Activated CD4-positive, alpha-beta memory T cell treated with anti-CD3 and anti-CD28 coated beads for 36 hours (primary cell): ENCODE measurements at regions of chr1 and their contacts with region 1.

Region 1: DNA sequence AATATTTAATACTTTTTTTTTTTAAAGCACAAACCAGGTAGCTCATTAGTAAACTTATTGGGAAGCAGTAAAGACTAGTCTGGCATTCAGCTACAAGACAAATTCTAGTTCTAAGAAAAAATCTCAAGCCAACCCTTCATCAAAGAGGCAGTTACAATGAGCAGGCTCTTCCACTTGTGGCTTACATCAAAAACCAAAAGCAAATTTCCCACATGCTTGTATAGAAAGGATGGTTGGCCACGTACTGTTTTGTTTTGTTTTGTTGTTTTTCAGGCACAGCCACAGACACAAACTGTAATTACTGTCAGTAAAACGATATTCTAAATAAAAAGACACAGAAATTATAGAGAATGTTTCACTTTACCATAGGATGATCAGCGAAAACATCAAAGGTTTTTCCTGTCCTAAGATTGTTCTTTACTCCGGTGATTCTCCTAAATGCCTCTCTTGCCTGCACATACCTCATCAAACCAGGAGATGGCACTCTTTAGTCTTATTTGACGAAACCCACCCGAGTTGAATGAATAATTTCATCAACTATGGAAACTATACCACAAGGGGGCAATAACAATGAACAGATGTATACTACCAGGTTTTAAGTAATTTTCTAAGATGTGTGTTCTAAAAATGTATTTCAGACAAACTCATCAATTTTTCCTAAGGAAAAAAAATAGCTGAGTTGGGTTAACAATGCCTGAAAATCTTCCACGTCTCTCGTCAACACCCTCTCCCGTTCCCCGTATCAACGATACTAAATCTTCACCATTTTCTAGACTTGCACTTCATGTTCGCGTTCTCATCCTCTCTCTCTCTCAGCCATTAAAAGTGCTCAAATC is 26.9 kb downstream of the RPL5 start:
- DNase-seq: peak; percentile 39
- H3K4me3 Mint-ChIP-seq: peak overlapping the region; percentile 7
- H3K27ac Mint-ChIP-seq: peak overlapping the region; percentile 0
- H3K4me1 Mint-ChIP-seq: peaks cover 19% of the 10 kb centered on the region
- H3K27me3 Mint-ChIP-seq: no peaks in the 10 kb centered on the region

Region 2: DNA sequence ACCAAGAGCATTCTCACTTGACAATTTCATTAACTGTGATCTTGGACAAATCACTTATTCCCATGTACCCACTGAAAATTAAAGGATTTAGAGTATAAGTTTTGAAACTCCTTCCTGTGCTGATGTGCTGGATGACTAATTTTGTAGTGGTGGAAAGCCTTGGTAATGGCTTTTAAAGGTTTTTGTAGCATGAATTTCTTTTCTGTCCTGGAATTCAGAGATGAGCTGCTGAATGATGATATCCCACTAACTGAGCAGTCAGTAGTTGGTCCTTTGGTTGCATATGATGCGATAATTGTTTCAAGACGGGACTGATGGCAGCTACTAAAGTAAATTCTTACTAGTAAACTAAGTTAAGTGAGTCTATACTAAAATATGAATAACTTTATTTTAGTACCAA is 21.7 kb before region 1 on chr1:
- CTCF ChIA-PET with region 1: interaction called, 11 read pairs
- POLR2A ChIA-PET with region 1: interaction called, 3 read pairs
- intact Hi-C with region 1: no loop called
- DNase-seq: no peak
- H3K4me3 Mint-ChIP-seq: peak overlapping the region; percentile 38
- H3K27ac Mint-ChIP-seq: peak overlapping the region; percentile 95
- H3K4me1 Mint-ChIP-seq: peaks cover 79% of the 10 kb centered on the region
- H3K27me3 Mint-ChIP-seq: no peaks in the 10 kb centered on the region

Region 3: GRCh38 chr1:92877792-92878191 is 19.0 kb after region 1 on chr1:
- CTCF ChIA-PET with region 1: interaction called, 20 read pairs
- POLR2A ChIA-PET with region 1: no interaction called
- intact Hi-C with region 1: loop called (anchors 1 kb)
- DNase-seq: no peak
- H3K4me3 Mint-ChIP-seq: peak overlapping the region; percentile 23
- H3K27ac Mint-ChIP-seq: peak overlapping the region; percentile 70
- H3K4me1 Mint-ChIP-seq: peaks cover 27% of the 10 kb centered on the region
- H3K27me3 Mint-ChIP-seq: no peaks in the 10 kb centered on the region

Region 4: GRCh38 chr1:92951141-92951582 is 92.4 kb after region 1 on chr1:
- CTCF ChIA-PET with region 1: interaction called, 172 read pairs
- POLR2A ChIA-PET with region 1: no interaction called
- intact Hi-C with region 1: no loop called
- DNase-seq: peak; percentile 36
- H3K4me3 Mint-ChIP-seq: no peak overlapping the region
- H3K27ac Mint-ChIP-seq: no peak overlapping the region
- H3K4me1 Mint-ChIP-seq: peaks cover 36% of the 10 kb centered on the region
- H3K27me3 Mint-ChIP-seq: no peaks in the 10 kb centered on the region

Region 5: DNA sequence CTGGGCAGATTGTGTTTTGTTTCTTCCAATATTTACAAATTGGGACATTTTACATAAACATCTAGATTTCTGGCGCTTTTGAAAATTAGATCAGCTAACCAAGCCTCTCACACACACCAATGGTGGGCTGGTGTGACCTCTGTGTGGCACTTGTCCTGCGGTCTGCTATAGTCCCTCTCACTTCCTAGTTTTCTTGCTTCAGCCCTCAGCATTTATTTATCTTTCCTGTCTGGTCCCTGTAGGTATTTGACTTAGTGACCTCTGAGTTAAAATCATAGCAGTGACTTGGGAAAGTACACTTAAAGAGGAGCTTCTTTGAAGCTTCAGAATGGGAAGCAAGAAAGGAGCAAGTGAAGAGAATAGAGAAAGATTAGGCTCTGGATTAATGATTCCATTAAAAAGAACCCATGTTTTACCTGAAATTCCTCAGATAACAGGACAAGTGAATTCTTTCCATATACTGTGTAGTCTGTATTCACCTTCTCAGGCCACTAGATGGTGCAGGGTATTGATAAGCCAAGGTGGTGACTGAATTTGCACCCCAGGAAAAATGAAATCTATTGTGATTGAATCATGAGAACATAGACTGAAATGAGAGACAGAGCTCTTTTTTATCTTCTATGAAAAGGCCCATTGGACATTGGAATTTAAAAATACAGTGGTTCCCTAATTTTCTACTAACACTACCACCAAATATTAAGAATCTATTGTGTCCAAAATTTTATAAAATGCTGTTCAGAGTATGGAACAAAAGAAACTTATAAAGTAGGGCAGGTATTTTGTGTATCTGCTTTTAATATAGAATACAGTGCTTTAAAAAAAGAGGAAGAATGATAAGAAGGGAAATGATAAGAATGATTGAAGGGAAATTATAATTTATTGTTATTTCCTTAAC is 109.6 kb after region 1 on chr1:
- CTCF ChIA-PET with region 1: interaction called, 172 read pairs
- POLR2A ChIA-PET with region 1: no interaction called
- intact Hi-C with region 1: no loop called
- DNase-seq: no peak
- H3K4me3 Mint-ChIP-seq: no peak overlapping the region
- H3K27ac Mint-ChIP-seq: no peak overlapping the region
- H3K4me1 Mint-ChIP-seq: peaks cover 24% of the 10 kb centered on the region
- H3K27me3 Mint-ChIP-seq: no peaks in the 10 kb centered on the region

Region 6: GRCh38 chr1:92994105-92994712 is 135.4 kb after region 1 on chr1:
- CTCF ChIA-PET with region 1: interaction called, 205 read pairs
- POLR2A ChIA-PET with region 1: interaction called, 3 read pairs
- intact Hi-C with region 1: loop called (anchors 1 kb)
- DNase-seq: peak; percentile 66
- H3K4me3 Mint-ChIP-seq: no peak overlapping the region
- H3K27ac Mint-ChIP-seq: no peak overlapping the region
- H3K4me1 Mint-ChIP-seq: peaks cover 42% of the 10 kb centered on the region
- H3K27me3 Mint-ChIP-seq: no peaks in the 10 kb centered on the region

Region 7: GRCh38 chr1:93061895-93062792 is 203.4 kb after region 1 on chr1:
- CTCF ChIA-PET with region 1: interaction called, 17 read pairs
- POLR2A ChIA-PET with region 1: no interaction called
- intact Hi-C with region 1: loop called (anchors 1 kb)
- DNase-seq: peak; percentile 61
- H3K4me3 Mint-ChIP-seq: no peak overlapping the region
- H3K27ac Mint-ChIP-seq: no peak overlapping the region
- H3K4me1 Mint-ChIP-seq: peaks cover 4% of the 10 kb centered on the region
- H3K27me3 Mint-ChIP-seq: peaks cover 9% of the 10 kb centered on the region